H1 (cell line): ENCODE measurements at regions of chr1 and their contacts with region 1.

Region 1: DNA sequence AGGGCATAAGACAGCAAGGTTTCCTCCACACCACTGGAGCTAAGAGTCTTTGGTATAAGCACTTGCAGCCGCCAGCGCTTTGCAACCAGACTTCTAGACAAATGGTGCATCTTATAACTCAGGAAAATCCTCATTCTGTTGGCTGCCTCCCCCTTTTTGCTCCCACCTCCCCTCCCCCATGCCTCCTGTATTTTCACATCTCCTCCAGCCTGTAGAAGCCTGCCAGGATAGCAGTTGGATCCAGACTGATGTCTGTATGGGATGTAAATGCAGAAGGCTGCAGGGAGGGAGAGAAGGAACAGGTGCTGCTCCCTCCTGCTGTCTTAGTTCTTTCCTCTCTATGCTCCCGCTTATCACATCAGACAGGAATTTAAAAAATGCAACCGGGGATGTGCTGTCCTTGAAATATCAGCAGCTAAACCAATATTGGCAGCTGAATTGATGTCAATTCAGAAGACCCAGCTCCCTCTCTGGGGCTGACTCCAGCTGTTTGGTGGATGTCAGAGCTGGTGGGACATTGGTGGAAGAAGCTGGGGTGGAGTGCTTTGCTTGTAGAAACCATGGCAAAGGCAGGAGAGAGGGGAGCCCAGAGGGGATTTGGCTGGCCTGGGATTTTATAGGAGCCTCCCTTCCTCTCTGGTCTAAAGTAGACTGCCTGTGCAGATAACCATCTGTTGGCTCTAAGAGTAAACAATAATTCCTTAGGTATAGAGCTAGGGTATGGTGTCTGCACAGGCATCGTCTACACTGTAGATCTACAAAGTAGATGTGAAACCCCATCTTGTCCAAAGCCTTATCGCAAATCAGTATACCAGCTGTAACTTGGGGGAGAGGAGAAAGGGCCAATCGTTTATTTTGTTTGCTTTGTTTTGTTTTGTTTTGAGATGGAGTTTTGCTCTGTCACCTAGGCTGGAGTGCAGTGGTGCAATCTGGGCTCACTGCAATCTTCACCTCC is 53.6 kb downstream of the NFASC start:
- DNase-seq: peak in 1 of 2 experiments; percentile 79
- H3K4me3 ChIP-seq: peak overlapping the region in 1 of 4 experiments; percentile 27; a peak in 2 of 8 replicates
- H3K27ac ChIP-seq: no peak overlapping the region
- H3K4me1 ChIP-seq: peaks cover 25 to 46% (median 41%) of the 10 kb centered on the region in 4 experiments
- H3K27me3 ChIP-seq: no peaks in the 10 kb centered on the region
- CTCF ChIP-seq: no peak
- EP300 ChIP-seq: peak in 1 of 2 experiments; percentile 92; a peak in 1 of 3 replicates
- POLR2A ChIP-seq: no peak
- RAD21 ChIP-seq: no peak

Region 2: DNA sequence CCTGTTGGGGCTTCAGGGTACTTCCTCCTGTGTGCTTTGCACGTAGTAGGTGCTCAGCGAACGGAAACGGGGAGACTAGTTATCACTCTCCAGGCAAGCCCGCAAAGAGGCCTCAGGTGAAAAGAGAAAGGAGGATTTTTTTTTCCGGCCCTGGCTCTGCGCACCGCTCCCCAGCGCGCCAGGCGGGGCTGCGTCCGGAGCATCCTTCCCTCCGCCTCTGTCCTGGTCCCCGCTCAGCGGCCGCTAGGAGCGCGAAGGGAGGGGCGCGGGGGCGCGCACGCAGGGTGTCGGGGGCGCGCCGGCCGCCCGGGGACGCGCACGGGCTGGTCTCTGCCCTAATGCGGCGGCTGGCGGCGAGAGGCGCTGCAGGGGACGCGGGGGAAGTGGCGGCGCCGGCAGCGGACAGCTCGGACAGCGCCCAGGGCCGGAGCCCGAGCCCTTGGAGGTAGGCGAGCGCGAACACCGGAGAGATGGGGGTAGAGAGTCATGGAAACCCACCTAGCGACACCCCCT is 95.9 kb before region 1 on chr1:
- CTCF ChIA-PET with region 1: interaction called, 11 read pairs
- POLR2A ChIA-PET with region 1: interaction called, 5 read pairs
- DNase-seq: peak; percentile 43 to 93
- H3K4me3 ChIP-seq: peak overlapping the region; percentile 47 to 66 (median 55)
- H3K27ac ChIP-seq: no peak overlapping the region
- H3K4me1 ChIP-seq: peaks cover 3 to 10% (median 8%) of the 10 kb centered on the region in 4 experiments; a peak in 6 of 7 replicates
- H3K27me3 ChIP-seq: peaks cover 0 to 8% (median 3%) of the 10 kb centered on the region in 4 experiments; a peak in 4 of 7 replicates
- CTCF ChIP-seq: peak in 2 of 3 experiments; percentile 19 to 35; a peak in 3 of 4 replicates
- EP300 ChIP-seq: no peak
- POLR2A ChIP-seq: no peak
- RAD21 ChIP-seq: peak in 1 of 2 experiments; percentile 32; a peak in 1 of 4 replicates